ENCODE measurements at regions of chr19 and their contacts with region 1.

Region 1: DNA sequence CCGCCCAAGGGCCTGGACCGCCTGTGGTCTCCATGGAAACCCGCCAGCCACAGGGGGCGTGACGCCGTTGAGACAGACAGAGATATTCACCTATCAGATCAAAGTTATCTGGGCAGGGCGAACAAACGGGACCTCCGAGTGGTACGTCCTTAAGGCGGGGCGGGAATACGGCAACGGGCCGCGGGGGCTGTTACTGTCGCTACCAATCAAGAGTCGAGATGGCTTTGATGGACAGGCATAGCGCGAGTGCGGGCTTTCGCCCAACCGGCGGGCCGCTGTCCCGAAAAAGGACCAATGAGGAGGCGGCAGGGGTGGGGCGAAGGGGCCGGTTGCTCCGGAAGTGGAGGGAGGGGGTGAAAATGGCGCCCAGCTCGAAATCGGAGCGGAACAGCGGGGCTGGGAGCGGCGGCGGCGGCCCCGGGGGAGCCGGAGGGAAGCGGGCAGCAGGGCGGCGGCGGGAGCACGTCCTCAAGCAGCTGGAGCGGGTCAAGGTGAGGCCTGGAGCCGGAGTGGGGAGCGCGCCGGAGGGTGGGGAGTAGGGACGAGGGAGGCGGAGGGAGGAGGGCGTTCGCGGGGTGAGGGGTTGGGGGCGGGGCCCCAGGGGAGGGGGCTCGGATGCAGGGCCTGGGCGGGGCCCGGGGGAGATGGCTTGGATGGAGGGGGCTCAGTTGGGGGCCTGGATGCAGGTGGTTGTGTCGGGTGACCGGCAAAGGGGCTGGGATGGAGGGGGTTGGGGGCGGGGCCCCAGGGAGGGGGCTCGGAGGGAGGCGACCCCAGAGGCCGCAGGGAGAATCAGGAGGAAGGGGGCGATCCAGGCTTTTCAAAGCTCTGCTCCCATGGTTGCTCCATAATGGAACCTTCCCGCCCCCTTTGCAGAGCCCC is at the start of gene DCAF15:
- DNase-seq: peak; percentile 100
- H3K4me3 Mint-ChIP-seq: peak within 1 kb of the TSS; percentile 89
- H3K27ac Mint-ChIP-seq: peak within 1 kb of the TSS; percentile 63
- H3K4me1 Mint-ChIP-seq: peaks cover 9% of the 10 kb centered on the region
- H3K27me3 Mint-ChIP-seq: no peaks in the 10 kb centered on the region
- CTCF ChIP-seq: no peak
- total RNA-seq, gene DCAF15: 17.6 and 19.3 TPM in 2 replicates

Region 2: DNA sequence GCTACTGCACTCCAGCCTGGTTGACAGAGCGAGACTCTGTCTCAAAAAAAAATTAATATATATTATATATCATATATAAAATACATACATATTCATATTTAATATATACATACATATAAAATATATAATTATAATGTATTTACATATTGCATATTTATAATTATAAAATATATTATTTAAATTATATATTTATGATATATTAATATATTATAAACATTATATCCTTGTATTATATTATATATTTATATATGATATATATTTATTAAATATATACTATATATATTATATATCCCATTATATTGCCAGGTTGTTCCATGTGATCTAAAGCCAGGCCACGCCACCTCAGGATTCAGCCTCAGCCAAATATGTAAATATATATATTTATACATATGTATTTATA is 56.2 kb before region 1 on chr19:
- CTCF ChIA-PET with region 1: no interaction called
- POLR2A ChIA-PET with region 1: no interaction called
- intact Hi-C with region 1: no loop called
- DNase-seq: no peak
- H3K4me3 Mint-ChIP-seq: no peak overlapping the region
- H3K27ac Mint-ChIP-seq: no peak overlapping the region
- H3K4me1 Mint-ChIP-seq: no peaks in the 10 kb centered on the region
- H3K27me3 Mint-ChIP-seq: no peaks in the 10 kb centered on the region
- CTCF ChIP-seq: no peak

Region 3: GRCh38 chr19:14006243-14006765 is 53.9 kb after region 1 on chr19 and contains the start of gene RFX1:
- CTCF ChIA-PET with region 1: no interaction called
- POLR2A ChIA-PET with region 1: interaction called, 12 read pairs
- intact Hi-C with region 1: no loop called
- DNase-seq: peak; percentile 100
- H3K4me3 Mint-ChIP-seq: peak within 1 kb of the TSS; percentile 90
- H3K27ac Mint-ChIP-seq: peak within 1 kb of the TSS; percentile 100
- H3K4me1 Mint-ChIP-seq: peaks cover 4% of the 10 kb centered on the region
- H3K27me3 Mint-ChIP-seq: no peaks in the 10 kb centered on the region
- CTCF ChIP-seq: no peak
- total RNA-seq, gene RFX1: 16.8 and 17.7 TPM in 2 replicates

Region 4: GRCh38 chr19:14400951-14401431 is 448.6 kb after region 1 on chr19:
- CTCF ChIA-PET with region 1: no interaction called
- POLR2A ChIA-PET with region 1: no interaction called
- intact Hi-C with region 1: no loop called
- DNase-seq: peak; percentile 76
- H3K4me3 Mint-ChIP-seq: peak overlapping the region; percentile 16
- H3K27ac Mint-ChIP-seq: peak overlapping the region; percentile 77
- H3K4me1 Mint-ChIP-seq: peaks cover 16% of the 10 kb centered on the region
- H3K27me3 Mint-ChIP-seq: no peaks in the 10 kb centered on the region
- CTCF ChIP-seq: no peak